Cardiac septum (tissue), 1 donor: ENCODE measurements at regions of chr13 and their contacts with region 1.

Region 1: GRCh38 chr13:34076943-34077703 is 259.2 kb downstream of the RFC3 start:
- DNase-seq: no peak

Region 2: DNA sequence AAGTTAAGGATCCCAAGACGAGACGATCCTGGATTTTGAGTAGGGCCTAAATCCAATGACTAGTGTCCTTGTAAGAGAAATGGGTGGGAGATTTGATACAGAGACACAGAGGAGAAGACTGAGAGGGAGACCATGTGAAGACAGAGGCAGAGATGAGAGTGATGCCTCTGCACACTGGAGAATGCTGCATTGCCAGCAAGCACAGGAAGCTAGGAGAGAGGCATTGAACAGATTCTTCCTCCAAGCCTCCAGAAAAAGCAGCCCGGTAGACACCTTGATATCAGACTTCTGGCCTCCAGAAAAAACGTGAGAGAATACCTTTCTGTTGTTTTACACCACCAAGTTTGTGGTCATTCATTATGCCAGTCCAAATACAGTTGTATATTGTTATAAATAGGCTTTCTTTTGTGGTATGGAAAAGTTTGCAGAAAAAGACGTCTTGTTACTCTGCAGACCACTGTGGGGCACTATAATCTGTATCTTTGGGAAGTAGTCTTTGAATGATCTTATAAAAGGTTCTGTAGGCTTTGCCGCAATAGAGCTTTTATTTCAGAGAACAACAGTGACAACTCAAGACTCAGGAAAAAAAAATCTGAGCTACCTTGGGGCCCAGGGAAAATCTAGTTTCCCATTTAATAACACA is 277.1 kb before region 1 on chr13:
- intact Hi-C with region 1: loop called (anchors 10 kb)
- DNase-seq: no peak

Region 3: DNA sequence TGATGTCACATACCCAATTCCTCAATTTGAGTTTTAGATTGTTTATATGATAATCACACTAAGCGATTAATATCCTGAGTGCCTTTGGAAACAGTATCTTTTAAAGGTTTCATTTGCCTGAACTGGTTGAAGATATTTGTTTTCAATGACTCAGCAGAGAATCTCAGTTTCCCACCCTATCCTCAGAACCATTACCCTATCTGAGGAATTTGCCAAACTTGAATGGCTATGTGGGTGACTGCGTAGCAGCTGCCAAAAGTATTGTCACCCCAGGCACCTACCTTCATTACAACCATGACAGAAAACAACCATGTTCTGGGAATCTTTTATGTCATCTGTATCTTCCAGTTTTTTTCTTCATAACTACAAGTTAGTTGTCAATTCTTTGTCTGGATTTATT is 424.9 kb after region 1 on chr13:
- intact Hi-C with region 1: no loop called
- DNase-seq: no peak